Common myeloid progenitor, CD34-positive (primary cell): ENCODE measurements at regions of chr10 and their contacts with region 1.

Region 1: GRCh38 chr10:95363303-95363912 is 72.6 kb upstream of the PDLIM1 start:
- DNase-seq: peak; percentile 60 to 83 (median 76)
- H3K4me3 ChIP-seq: no peak overlapping the region
- H3K27ac ChIP-seq: no peak overlapping the region
- H3K4me1 ChIP-seq: no peaks in the 10 kb centered on the region
- H3K27me3 ChIP-seq: no peaks in the 10 kb centered on the region

Region 2: GRCh38 chr10:95236068-95236903 is 127.1 kb before region 1 on chr10:
- CTCF ChIA-PET with region 1: interaction called, 399 read pairs
- POLR2A ChIA-PET with region 1: no interaction called
- DNase-seq: peak in 1 of 3 donors; percentile 25
- H3K4me3 ChIP-seq: no peak overlapping the region
- H3K27ac ChIP-seq: no peak overlapping the region
- H3K4me1 ChIP-seq: peaks cover 0 to 2% (median 0%) of the 10 kb centered on the region in 4 experiments
- H3K27me3 ChIP-seq: no peaks in the 10 kb centered on the region

Region 3: GRCh38 chr10:95266674-95267095 is 96.7 kb before region 1 on chr10:
- CTCF ChIA-PET with region 1: interaction called, 10 read pairs
- POLR2A ChIA-PET with region 1: no interaction called
- DNase-seq: peak; percentile 93 to 97 (median 94)
- H3K4me3 ChIP-seq: no peak overlapping the region
- H3K27ac ChIP-seq: peak overlapping the region; percentile 81 to 89
- H3K4me1 ChIP-seq: peaks cover 0 to 17% (median 4%) of the 10 kb centered on the region in 4 experiments
- H3K27me3 ChIP-seq: no peaks in the 10 kb centered on the region

Region 4: GRCh38 chr10:95350219-95350829 is 13.1 kb before region 1 on chr10:
- CTCF ChIA-PET with region 1: interaction called, 21 read pairs
- POLR2A ChIA-PET with region 1: no interaction called
- DNase-seq: no peak
- H3K4me3 ChIP-seq: no peak overlapping the region
- H3K27ac ChIP-seq: no peak overlapping the region
- H3K4me1 ChIP-seq: no peaks in the 10 kb centered on the region
- H3K27me3 ChIP-seq: no peaks in the 10 kb centered on the region